Left ventricle myocardium superior (tissue), 1 donor: ENCODE measurements at regions of chr1 and their contacts with region 1.

Region 1: GRCh38 chr1:30911046-30911954 is 2.7 kb upstream of the SDC3 start:
- DNase-seq: peak; percentile 93
- ATAC-seq: peak; percentile 79

Region 2: GRCh38 chr1:30801771-30802198 is 109.5 kb before region 1 on chr1:
- intact Hi-C with region 1: loop called (anchors 5 kb)
- DNase-seq: peak; percentile 90
- ATAC-seq: peak; percentile 77